GM23248 (cell line): ENCODE measurements at regions of chr1 and their contacts with region 1.

Region 1: DNA sequence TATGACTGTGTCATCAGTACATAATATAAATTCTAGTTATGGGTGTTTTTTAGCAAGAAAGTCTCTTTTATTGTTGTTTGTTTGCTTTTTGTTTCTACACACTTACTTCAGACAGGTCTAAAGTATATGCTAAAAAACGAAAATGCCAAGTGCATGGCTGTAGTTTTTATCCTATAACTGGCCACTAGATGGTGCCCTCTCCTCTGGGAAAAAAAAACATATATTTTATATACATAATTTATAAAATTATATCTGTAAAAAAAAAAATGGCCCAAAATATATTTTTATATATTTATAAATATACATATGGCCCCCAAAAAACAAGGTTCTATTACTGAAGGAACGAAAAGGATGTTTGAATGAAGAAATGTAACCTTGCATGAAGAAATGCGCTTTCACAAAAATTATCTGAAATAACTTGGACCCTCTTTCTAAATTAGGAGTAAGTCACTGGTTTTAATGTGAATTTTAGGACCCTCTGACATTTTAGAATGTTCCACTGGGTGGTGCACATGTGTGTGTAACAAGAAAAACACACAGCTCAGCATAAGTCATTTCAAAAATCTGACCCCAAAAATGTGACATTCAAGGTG is 93.5 kb downstream of the TTLL7 start:
- DNase-seq: peak; percentile 52
- H3K4me3 ChIP-seq: no peak overlapping the region
- H3K27ac ChIP-seq: no peak overlapping the region
- H3K4me1 ChIP-seq: peaks cover 19% of the 10 kb centered on the region
- H3K27me3 ChIP-seq: no peaks in the 10 kb centered on the region

Region 2: GRCh38 chr1:83799594-83799993 is 105.8 kb before region 1 on chr1:
- in situ Hi-C with region 1: no loop called
- DNase-seq: peak; percentile 3
- H3K4me3 ChIP-seq: no peak overlapping the region
- H3K27ac ChIP-seq: no peak overlapping the region
- H3K4me1 ChIP-seq: no peaks in the 10 kb centered on the region
- H3K27me3 ChIP-seq: no peaks in the 10 kb centered on the region

Region 3: GRCh38 chr1:84620720-84621313 is 715.4 kb after region 1 on chr1:
- in situ Hi-C with region 1: loop called (anchors 25 kb)
- DNase-seq: peak; percentile 87
- H3K4me3 ChIP-seq: peak overlapping the region; percentile 71
- H3K27ac ChIP-seq: peak overlapping the region; percentile 95
- H3K4me1 ChIP-seq: peaks cover 16% of the 10 kb centered on the region
- H3K27me3 ChIP-seq: no peaks in the 10 kb centered on the region